ENCODE measurements at regions of chr1 and their contacts with region 1.

Region 1: DNA sequence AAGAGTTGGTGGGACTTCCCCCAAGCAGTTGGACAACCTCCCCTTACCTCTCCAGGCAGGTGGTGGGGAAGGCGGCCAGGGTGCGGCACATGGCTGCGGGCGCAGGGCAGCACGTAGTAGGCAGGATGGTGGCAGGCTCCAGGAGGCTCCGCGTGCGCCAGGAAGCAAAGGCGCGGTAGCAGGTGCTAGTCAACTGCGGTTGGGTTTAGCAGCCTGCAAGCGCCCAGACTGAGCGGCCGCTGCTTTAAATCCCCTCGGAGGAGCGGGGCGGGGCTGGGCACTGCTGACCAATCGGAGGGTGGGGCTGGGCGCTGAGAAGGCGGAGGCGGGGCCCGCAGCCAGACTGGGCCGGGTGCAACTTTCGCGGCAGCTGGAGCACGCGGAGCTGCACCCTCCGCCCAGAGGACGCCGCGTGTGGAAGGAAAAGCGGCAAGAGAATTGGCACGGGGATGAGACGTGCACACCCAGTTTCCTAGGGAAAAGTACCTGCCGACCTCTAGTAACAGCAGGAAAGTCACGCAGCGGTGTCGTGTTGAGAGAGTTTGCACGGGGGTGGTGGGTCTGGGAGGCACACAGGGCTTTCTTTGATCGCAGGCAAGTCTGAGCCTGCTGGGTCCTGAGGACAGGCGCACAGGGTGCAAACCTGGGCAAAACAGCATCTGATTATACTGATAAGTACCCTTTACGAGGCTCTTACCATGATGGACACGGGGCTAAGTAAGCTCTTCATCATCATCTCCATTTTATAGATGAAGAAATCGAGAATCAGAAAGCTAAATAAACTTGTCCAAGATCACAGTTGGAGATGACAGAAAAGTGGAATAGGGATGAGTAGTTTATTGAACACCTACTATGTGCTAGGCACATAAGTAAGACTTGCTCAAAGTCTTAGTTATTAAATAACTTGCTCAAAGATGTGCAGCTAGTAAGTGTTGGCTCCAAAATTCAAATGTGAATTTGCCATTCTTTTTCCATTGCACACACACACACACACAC is at the start of gene RGS16:
- DNase-seq: peak; percentile 98
- ATAC-seq: peak; percentile 98
- total RNA-seq, gene RGS16: 0.97 TPM

Region 2: GRCh38 chr1:182084487-182085316 is 519.8 kb before region 1 on chr1:
- intact Hi-C with region 1: loop called (anchors 5 kb)
- DNase-seq: peak; percentile 91
- ATAC-seq: peak; percentile 93

Region 3: GRCh38 chr1:182446033-182446669 is 158.3 kb before region 1 on chr1:
- intact Hi-C with region 1: loop called (anchors 5 kb)
- DNase-seq: no peak
- ATAC-seq: peak; percentile 39

Region 4: GRCh38 chr1:182568647-182569284 is 35.7 kb before region 1 on chr1:
- intact Hi-C with region 1: no loop called
- DNase-seq: no peak
- ATAC-seq: no peak

Region 5: DNA sequence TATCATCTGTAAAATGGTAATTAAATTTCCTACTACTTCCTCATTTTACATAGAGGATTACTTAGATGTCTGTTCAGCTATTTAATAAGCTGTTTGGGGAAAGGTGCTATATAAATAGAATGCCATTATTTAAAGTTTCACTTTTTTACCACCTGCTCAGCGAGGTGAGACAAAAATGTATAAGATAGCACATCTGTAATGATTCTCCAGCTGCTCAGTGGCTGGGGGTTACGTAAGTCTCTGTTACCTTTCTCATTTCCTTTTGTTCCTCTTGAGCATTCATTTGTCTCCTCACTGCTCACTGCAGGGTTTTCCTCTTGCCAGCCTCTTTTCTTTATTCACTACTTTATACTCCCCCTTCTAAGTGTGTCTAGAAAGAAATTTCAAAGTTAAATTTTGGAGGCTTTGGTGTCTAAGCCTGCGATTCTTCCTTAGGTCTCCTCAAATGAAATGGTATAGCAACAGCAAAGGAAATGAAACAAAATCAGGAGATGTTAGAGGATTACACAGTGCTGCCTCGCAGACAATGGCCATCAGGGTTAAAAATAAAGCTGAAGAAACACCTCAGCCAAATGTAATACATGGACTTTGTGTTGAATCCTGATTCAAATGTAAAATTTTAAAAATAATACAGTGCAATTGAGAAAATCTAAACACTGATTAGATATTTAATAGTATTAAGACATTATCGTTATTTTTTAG is 73.1 kb after region 1 on chr1:
- intact Hi-C with region 1: loop called (anchors 5 kb)
- DNase-seq: no peak
- ATAC-seq: no peak

Region 6: GRCh38 chr1:182781841-182782586 is 177.5 kb after region 1 on chr1:
- intact Hi-C with region 1: loop called (anchors 1 kb)
- DNase-seq: peak; percentile 82
- ATAC-seq: peak; percentile 78